ENCODE measurements at regions of chr13 and their contacts with region 1.

Region 1: GRCh38 chr13:44577236-44578066 is 1.3 kb upstream of the TSC22D1 start:
- DNase-seq: peak; percentile 97 to 98 (median 98)
- ATAC-seq: peak; percentile 92 to 94 (median 92)
- H3K4me3 ChIP-seq: peak overlapping the region; percentile 72 to 98 (median 94)
- H3K27ac ChIP-seq: peak overlapping the region; percentile 92 to 99 (median 97)
- H3K4me1 ChIP-seq: peaks cover 0 to 43% (median 36%) of the 10 kb centered on the region in 12 donors
- H3K27me3 ChIP-seq: no peaks in the 10 kb centered on the region
- CTCF ChIP-seq: no peak
- POLR2A ChIP-seq: peak in 1 of 2 donors; percentile 74

Region 2: GRCh38 chr13:43558939-43559338 is 1018.5 kb before region 1 on chr13:
- intact Hi-C with region 1: no loop called
- DNase-seq: peak in 2 of 5 donors; percentile 26 to 35
- ATAC-seq: peak in 2 of 4 donors; percentile 54 to 64
- H3K4me3 ChIP-seq: no peak overlapping the region
- H3K27ac ChIP-seq: peak overlapping the region in 6 of 12 donors; percentile 5 to 52 (median 36)
- H3K4me1 ChIP-seq: peaks cover 0 to 25% (median 12%) of the 10 kb centered on the region in 12 donors
- H3K27me3 ChIP-seq: no peaks in the 10 kb centered on the region
- CTCF ChIP-seq: no peak
- POLR2A ChIP-seq: no peak

Region 3: DNA sequence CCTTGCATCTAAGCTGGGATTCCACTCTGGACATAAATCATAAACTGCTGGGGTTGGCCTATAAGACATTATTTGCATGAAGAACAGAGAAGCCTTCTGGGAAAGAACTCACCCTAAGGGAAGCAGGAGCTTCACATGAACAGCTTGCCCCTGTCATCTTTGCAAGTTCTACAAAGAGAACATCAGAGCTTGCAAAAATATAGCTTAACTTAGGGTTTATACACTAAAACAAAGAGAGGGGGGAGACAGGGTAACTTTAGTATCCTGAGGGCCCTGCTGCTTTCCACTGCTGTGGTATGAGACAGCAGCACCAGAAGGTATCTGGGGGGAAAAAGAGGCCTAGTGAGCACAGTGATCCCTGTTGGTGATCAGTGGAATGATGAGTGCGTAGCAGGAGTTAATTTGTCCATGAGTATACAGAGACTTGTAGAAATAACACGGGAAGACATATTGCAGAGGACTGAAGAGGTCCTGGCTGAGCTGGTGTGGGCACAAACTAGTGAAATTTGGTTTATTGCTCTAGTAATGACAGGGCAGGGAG is 114.8 kb after region 1 on chr13:
- intact Hi-C with region 1: loop called in 1 of 10 experiments (anchors 5 kb)
- DNase-seq: no peak
- ATAC-seq: no peak
- H3K4me3 ChIP-seq: no peak overlapping the region
- H3K27ac ChIP-seq: peak overlapping the region in 10 of 12 donors; percentile 29 to 73 (median 62)
- H3K4me1 ChIP-seq: peaks cover 0 to 38% (median 12%) of the 10 kb centered on the region in 12 donors
- H3K27me3 ChIP-seq: no peaks in the 10 kb centered on the region
- CTCF ChIP-seq: no peak
- POLR2A ChIP-seq: no peak

Region 4: DNA sequence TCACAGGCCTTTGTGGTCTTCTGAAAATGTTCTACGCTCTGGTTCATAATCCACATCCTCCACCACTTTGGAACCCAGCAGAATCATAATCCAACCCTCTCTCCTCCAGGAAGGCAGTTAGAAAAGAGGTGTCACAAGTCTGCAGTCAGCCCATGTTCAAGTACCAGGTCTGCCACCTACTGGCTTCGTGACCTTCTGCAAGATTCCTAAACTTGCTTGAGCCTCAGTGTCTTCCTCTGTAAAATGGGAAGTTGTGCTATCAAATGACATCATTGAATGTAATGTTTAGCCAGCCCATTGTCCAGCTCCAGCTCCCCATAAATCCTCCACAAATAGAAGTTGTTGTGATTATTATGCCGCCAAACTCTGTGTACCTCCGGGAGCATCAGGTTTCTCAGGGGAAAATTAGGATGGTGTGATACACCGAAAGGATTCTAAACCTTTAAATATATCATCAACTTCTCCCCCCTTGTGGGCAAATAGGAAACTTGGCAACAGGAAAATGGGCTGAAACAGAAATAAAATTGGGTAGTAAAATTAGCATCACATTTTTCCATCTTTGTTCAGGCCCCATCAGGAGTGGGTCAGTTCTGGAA is 302.1 kb after region 1 on chr13:
- intact Hi-C with region 1: loop called in 4 of 10 experiments (anchors 5 to 10 kb)
- DNase-seq: no peak
- ATAC-seq: peak in 1 of 4 donors; percentile 45
- H3K4me3 ChIP-seq: no peak overlapping the region
- H3K27ac ChIP-seq: no peak overlapping the region
- H3K4me1 ChIP-seq: no peaks in the 10 kb centered on the region
- H3K27me3 ChIP-seq: no peaks in the 10 kb centered on the region
- CTCF ChIP-seq: peak in 11 of 12 donors; percentile 16 to 52 (median 35)
- POLR2A ChIP-seq: no peak

Region 5: DNA sequence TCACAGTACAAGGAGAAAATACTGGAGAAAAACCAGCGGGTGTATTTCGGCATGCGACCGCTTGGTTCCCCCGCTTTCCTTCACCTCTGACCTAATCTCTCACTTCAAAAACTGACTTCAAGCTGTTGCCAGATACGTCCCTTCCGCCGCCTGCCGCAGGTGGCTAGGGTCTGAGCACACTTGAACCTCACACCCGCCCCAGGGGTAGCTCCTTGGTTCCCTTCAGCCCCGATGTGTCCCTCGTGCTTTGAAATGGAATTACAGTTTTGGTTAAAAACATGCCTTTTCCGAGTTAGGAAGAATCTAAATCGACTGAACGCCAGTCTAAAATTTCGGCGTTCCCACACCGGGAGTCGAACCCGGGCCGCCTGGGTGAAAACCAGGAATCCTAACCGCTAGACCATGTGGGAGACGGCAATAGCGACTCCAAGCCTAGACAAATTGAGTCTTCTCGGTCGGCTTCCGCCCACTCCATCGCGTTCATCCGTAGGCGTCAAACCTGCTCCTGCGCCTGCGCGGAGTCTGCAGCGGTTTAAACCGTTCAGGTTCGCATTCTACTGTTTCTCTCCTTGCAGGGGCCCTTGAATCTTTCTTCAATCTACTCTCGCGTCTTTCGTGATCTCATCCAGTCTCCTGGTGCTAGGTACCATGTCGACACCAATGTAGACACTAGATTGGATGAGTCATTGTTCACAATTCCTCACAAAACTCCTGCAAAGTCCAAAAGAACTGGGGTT is 340.3 kb after region 1 on chr13:
- intact Hi-C with region 1: loop called in 5 of 10 experiments (anchors 1 to 5 kb)
- DNase-seq: peak; percentile 94 to 97 (median 97)
- ATAC-seq: peak; percentile 87 to 93 (median 90)
- H3K4me3 ChIP-seq: peak overlapping the region; percentile 3 to 71 (median 60)
- H3K27ac ChIP-seq: peak overlapping the region; percentile 91 to 98 (median 95)
- H3K4me1 ChIP-seq: peaks cover 0 to 33% (median 23%) of the 10 kb centered on the region in 12 donors
- H3K27me3 ChIP-seq: no peaks in the 10 kb centered on the region
- CTCF ChIP-seq: peak in 8 of 12 donors; percentile 15 to 60 (median 40)
- POLR2A ChIP-seq: peak in 1 of 2 donors; percentile 42

Measured in heart left ventricle (tissue), 16 donors.